ENCODE measurements at regions of chr15 and their contacts with region 1.

Region 1: GRCh38 chr15:56918046-56918938 is at the start of gene TCF12:
- DNase-seq: peak; percentile 98
- total RNA-seq, gene TCF12: 95.2 to 102 TPM

Region 2: GRCh38 chr15:56886932-56887781 is 31.1 kb before region 1 on chr15:
- intact Hi-C with region 1: loop called (anchors 1 to 2 kb)
- DNase-seq: peak; percentile 98

Region 3: DNA sequence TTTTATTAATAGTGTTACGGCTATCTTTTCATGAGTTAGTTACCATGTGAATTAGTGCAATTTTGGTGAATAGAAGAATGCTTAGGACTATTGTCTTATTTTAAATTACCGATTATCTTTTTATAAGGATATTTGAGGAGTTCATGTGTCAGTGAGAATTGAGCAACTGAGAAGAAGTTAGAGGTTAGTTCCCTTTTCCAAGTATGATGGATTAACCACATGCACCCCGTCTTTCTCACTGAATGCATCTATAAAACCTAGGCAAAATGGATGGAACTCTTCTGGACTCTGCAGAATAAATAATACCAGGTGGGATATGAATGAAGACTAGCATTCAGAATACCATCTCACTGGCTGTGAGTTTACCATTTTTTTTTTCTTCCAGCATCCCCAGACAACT is 74.4 kb after region 1 on chr15:
- intact Hi-C with region 1: loop called in 1 of 2 experiments (anchors 2 kb)
- DNase-seq: no peak

Measured in posterior vena cava (tissue), 2 donors.